ENCODE measurements at regions of chr16 and their contacts with region 1.

Region 1: DNA sequence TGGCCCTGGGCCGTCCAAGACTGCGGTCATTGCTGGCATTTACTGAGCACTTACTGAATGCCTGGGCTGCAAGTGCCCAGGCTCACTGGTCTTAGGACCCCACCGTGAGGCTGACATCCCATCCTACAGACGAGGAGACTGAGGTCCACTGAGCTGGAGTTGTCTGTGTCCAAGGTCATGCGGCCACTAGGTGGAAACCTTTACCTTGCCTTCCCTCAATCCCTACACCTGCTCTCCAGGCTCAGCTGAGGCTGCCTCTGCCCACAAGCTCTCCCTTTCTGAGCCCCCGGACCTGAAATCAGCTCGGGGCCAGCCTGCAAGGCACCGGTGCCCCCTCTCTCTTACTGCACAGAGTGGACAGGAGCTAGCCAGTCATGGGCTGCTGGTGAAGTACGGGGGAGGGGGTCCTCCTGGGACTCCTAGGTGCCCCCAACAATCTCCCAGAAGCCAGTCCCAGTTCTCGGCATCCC is 1.5 kb downstream of the CASKIN1 start:
- DNase-seq: peak in 9 of 10 donors; percentile 35 to 80 (median 52)
- ATAC-seq: peak; percentile 79 to 82
- H3K4me3 Mint-ChIP-seq: peak overlapping the region in 9 of 10 donors; percentile 34 to 79 (median 59)
- H3K27ac Mint-ChIP-seq: peak overlapping the region in 3 of 10 donors; percentile 14 to 73 (median 20)
- H3K4me1 Mint-ChIP-seq: peaks cover 2 to 15% (median 7%) of the 10 kb centered on the region in 4 donors
- H3K27me3 Mint-ChIP-seq: peaks cover 6 to 27% (median 18%) of the 10 kb centered on the region in 5 donors

Region 2: DNA sequence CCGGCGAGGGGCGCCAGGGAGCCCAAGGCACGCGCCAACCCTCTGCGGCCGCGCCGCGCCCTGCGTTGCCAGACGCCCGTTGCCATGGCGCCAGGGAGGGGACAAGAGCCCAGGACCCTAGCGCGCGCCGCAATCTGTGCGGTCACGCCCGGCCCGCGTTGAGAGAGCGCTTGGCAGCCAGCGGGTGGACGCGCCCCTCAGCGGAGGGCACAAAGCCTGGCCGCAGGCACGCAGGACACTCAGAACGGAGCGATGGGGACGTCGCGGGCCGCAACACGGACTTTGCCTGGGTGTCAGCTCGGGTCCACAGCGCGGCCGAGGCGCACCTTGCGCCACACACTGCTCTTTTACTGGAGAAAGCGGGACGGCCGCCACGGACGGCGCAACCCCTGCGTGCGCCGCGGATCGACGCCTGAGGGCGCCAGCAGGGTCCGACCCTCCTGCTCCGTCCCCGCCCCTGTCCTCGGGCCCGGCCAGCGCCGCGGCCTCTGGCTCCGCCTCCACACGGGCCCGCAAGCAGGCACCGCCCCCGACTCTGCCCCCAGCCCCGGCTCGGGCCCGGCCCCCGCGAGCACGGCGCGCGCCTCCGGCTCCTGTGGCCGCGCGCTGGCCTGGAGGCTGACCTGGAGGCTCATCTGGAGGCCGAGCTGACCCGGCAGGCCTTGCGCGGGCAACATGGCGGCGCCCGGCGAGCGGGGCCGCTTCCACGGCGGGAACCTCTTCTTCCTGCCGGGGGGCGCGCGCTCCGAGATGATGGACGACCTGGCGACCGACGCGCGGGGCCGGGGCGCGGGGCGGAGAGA is 211.1 kb before region 1 on chr16 and contains the start of gene GFER:
- POLR2A ChIA-PET with region 1: no interaction called
- DNase-seq: peak in 8 of 10 donors; percentile 48 to 75 (median 56)
- ATAC-seq: peak; percentile 62 to 74
- H3K4me3 Mint-ChIP-seq: peak within 1 kb of the TSS; percentile 74 to 89 (median 79)
- H3K27ac Mint-ChIP-seq: peak within 1 kb of the TSS; percentile 10 to 83 (median 74)
- H3K4me1 Mint-ChIP-seq: peaks cover 7 to 21% (median 16%) of the 10 kb centered on the region in 4 donors
- H3K27me3 Mint-ChIP-seq: peaks cover 1 to 38% (median 10%) of the 10 kb centered on the region in 5 donors
- polyA plus RNA-seq, gene GFER: 21.4 to 30.0 (median 26.3) TPM

Region 3: GRCh38 chr16:2251483-2252240 is 56.8 kb after region 1 on chr16 and contains the start of gene ECI1:
- POLR2A ChIA-PET with region 1: interaction called, 13 read pairs
- DNase-seq: peak; percentile 40 to 85 (median 66)
- ATAC-seq: peak; percentile 76 to 83
- H3K4me3 Mint-ChIP-seq: peak within 1 kb of the TSS; percentile 82 to 90 (median 86)
- H3K27ac Mint-ChIP-seq: peak within 1 kb of the TSS; percentile 82 to 95 (median 92)
- H3K4me1 Mint-ChIP-seq: peaks cover 0 to 16% (median 7%) of the 10 kb centered on the region in 4 donors
- H3K27me3 Mint-ChIP-seq: peaks cover 0 to 1% (median 0%) of the 10 kb centered on the region in 5 donors
- polyA plus RNA-seq, gene ECI1: 30.6 to 40.4 (median 31.0) TPM